ENCODE measurements at regions of chr20 and their contacts with region 1.

Region 1: GRCh38 chr20:54475334-54476168 is at the start of gene DOK5:
- DNase-seq: no peak
- total RNA-seq, gene DOK5: 26.3 TPM

Region 2: DNA sequence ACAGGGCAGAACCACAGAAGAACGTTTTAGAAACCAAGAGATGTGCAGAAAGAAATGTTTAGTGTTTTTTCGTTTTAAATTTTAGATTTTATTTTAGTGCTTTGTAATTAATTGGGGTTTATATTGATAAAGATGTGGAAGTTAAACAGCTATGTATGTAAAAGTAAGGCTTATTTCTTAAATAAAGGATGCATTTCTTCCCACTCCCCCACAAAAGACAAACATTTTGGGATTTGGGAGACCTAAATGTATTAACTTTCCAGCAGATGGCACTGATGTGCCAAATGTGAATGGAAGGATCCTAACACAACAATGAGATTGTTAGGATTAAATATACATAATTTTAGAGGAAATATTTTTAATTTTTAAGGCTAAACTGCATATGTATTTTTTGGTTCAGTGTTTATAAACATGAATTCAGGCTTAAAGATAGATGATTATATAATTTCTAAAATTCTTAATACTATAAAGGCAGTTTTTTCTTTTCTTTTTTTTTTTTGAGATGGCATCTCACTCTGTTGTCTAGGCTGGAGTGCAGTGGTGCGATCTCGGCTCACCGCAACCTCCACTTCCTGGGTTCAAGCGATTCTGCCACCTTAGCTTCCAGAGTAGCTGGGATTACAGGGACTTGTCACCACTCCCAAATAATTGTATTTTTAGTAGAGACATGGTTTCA is 255.7 kb before region 1 on chr20:
- intact Hi-C with region 1: loop called (anchors 5 kb)
- DNase-seq: no peak

Region 3: GRCh38 chr20:54438145-54438544 is 37.4 kb before region 1 on chr20:
- intact Hi-C with region 1: no loop called
- DNase-seq: no peak

Region 4: DNA sequence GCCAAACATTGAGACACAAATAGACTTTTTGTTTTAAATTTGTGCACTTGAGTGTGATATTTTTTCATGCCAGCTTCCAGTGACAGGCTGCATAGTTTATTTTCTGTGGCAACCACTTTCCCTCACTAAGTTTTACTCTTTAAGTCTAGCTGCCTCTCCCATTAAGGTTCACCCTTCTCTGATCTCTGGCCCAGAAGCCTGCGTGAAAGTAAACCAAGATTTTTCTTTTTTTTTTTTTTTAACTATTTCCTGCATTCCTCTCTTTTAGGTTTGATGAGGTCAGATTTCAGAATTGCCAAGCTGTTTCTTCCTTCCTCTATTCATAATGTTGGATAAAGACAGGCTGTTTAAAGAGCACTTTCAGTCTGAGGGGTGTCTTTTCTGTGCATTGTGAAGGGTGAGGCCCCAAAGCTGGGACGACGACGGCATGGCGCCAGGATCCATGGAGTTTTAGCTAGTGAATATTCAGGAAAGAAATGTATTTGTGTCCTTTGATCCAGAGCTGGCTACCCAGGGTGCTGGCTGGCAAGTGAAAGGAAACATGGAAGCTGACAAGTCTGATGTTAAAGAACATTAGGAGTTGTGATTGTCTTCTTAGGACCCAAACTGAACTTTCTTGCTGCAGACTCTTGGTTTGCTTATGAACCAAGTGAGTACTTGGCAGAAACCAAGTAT is 50.5 kb after region 1 on chr20:
- intact Hi-C with region 1: loop called (anchors 5 kb)
- DNase-seq: no peak

Region 5: GRCh38 chr20:54624706-54625390 is 149.3 kb after region 1 on chr20:
- intact Hi-C with region 1: loop called (anchors 5 kb)
- DNase-seq: no peak

Region 6: DNA sequence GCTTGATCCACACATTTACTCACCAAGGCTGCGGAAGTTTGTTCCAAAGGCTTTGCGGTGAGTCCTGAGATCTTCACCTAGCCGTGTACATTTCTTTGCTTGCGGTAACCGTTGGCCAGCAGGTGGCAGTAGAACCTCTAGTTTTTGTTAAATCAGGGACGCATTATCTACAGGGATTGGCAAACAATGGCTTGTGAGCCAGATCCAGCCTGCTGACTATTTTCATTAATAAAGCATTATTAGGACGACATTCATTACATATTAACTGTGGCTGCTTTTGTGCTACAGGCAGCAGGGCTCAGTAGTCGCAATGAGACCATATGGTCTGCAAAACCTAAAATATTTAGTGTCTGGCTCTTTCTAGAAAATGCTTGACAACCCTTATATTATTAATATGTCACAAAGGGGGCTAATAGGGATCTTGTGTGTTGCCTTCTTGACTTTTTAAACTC is 174.0 kb after region 1 on chr20:
- intact Hi-C with region 1: loop called (anchors 5 kb)
- DNase-seq: no peak

Measured in cardiac septum (tissue), 1 donor.